Mammary epithelial cell (primary cell): ENCODE measurements at regions of chr15 and their contacts with region 1.

Region 1: DNA sequence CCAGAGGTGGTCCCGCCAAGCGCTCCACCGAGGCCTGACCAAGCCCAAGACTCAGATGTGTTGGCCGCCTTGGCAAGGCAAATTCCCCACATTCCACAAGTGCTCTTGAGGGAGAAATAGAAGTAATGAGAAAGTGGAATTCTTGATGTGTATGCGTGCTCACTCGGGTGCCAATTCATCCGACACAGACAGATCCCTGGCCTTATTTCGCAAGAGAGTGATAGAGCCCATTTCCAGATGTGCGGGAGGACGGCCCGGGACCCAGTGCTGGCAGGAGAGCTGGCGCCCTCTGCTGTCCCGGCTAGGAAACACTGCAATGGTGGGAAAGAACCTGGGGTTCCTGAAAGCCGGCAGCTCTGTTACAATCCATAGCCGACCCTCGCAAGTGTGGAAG is 76.0 kb downstream of the HMG20A start:
- DNase-seq: peak; percentile 69
- H3K4me3 ChIP-seq: peak overlapping the region in 1 of 3 experiments; percentile 24
- H3K27ac ChIP-seq: no peak overlapping the region
- H3K4me1 ChIP-seq: peaks cover 28% of the 10 kb centered on the region
- H3K27me3 ChIP-seq: no peaks in the 10 kb centered on the region
- CTCF ChIP-seq: peak; percentile 92 to 97

Region 2: DNA sequence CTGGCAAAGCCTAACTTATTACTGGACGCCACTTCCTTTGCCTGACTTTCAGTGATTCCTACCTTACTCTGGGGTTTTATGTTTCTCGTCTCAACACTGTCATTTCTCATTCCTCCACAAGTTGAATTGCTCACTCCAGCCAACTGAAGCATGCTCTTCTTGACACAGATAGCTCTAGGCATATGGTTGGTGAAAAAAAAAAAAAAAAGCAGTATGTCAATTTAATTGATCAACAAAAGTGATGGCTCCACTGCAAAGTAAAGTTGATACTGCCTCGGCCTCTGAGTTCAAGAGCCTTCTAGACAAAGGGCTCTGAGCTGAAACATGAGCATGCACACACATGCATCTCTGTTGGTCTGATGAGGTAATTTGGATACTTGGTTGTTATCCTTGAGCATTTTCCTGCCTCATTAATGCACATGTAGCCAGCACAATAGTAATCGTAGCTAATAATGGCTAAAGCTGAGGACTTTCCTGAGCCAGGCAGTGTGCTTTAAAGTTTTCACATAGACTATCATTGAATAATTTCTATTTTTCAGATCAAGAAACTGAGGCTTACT is 1674.8 kb before region 1 on chr15:
- CTCF ChIA-PET with region 1: interaction called, 12 read pairs
- dilution Hi-C with region 1: no loop called
- in situ Hi-C with region 1: no loop called
- intact Hi-C with region 1: no loop called
- DNase-seq: peak; percentile 32
- H3K4me3 ChIP-seq: no peak overlapping the region
- H3K27ac ChIP-seq: no peak overlapping the region
- H3K4me1 ChIP-seq: no peaks in the 10 kb centered on the region
- H3K27me3 ChIP-seq: no peaks in the 10 kb centered on the region
- CTCF ChIP-seq: no peak

Region 3: DNA sequence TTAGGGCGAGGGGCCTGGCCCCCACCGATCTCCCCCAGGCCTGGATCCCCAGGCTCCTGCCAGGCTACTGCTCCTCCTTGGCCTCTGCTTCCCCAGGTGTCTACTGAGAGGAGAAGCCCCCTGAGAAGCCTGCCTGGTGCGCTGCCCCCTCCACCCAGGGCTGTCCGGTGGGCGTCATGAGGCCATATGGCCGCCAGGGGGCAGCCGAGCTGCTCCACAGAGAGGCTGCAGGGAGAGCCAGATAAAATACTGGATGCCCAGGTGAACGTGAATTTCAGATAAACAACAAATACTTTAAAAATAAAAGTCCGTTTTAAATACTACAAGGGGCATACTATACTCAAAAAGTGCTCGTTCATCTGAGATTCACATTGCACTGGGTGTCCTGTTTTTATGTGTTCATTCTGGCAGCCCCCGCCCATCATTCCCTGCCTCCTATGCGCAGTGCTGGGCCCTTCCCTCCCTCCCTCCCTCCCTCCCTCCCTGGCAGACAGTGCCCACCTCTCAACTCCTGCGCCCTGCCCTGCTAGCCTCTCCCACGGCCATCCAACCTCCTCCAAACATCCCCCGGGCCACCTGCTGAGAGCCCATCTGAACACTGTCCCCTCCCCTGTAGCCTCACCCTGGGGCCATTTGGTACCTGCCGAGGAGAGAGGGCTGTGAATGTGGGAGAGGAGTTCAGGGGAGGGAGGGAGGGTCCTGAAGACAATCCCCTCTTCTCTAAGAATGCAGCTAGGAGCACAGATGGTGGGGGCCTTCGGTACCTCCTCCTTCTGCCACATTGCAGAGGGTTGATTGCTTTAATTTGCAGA is 472.2 kb before region 1 on chr15:
- CTCF ChIA-PET with region 1: no interaction called
- dilution Hi-C with region 1: no loop called
- in situ Hi-C with region 1: no loop called
- intact Hi-C with region 1: loop called (anchors 2 kb)
- DNase-seq: peak; percentile 21
- H3K4me3 ChIP-seq: no peak overlapping the region
- H3K27ac ChIP-seq: no peak overlapping the region
- H3K4me1 ChIP-seq: peaks cover 12% of the 10 kb centered on the region
- H3K27me3 ChIP-seq: no peaks in the 10 kb centered on the region
- CTCF ChIP-seq: peak; percentile 75 to 88

Region 4: DNA sequence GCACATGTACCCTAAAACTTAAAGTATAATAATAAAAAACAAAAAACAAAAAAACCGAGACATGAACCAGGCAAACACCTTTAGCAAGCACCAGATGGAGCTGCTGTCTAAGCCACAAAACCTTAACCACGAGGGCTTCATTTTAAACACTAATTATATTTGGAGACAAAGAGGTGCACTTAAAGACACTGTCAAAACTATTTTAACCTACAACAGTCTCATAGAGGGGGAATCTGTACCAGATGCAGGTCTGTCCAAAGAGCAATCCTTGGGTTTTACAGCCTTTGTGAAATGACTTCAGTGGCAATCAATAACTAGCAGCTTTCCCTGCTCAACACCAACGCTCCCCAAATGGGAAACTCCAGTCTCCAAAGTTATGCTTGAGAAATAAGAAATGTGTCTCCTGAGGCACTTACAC is 310.1 kb before region 1 on chr15:
- CTCF ChIA-PET with region 1: interaction called, 5 read pairs
- dilution Hi-C with region 1: no loop called
- in situ Hi-C with region 1: loop called in 1 of 2 experiments (anchors 10 kb)
- intact Hi-C with region 1: loop called (anchors 1 kb)
- DNase-seq: no peak
- H3K4me3 ChIP-seq: no peak overlapping the region
- H3K27ac ChIP-seq: no peak overlapping the region
- H3K4me1 ChIP-seq: peaks cover 8% of the 10 kb centered on the region
- H3K27me3 ChIP-seq: no peaks in the 10 kb centered on the region
- CTCF ChIP-seq: peak; percentile 19 to 53

Region 5: DNA sequence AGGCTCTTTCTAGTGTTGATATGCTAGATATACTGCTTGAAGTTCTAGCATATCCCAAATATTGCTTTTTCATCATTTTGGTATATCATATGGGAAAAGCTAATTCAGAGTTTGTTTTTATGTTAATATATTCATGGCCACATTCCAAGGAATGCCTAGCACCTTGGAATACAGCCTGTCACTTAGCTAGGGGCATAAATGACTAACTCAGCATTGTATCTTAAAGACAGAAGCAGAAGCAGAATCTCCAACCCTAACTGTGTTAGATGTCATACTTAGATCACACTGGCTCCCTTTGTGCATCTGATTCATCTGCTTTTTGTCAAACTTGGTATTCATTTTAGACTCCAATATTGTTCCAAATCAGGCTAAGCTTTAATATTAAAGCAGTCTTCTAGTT is 295.0 kb before region 1 on chr15:
- CTCF ChIA-PET with region 1: no interaction called
- dilution Hi-C with region 1: no loop called
- in situ Hi-C with region 1: no loop called
- intact Hi-C with region 1: no loop called
- DNase-seq: no peak
- H3K4me3 ChIP-seq: no peak overlapping the region
- H3K27ac ChIP-seq: no peak overlapping the region
- H3K4me1 ChIP-seq: no peaks in the 10 kb centered on the region
- H3K27me3 ChIP-seq: no peaks in the 10 kb centered on the region
- CTCF ChIP-seq: no peak

Region 6: DNA sequence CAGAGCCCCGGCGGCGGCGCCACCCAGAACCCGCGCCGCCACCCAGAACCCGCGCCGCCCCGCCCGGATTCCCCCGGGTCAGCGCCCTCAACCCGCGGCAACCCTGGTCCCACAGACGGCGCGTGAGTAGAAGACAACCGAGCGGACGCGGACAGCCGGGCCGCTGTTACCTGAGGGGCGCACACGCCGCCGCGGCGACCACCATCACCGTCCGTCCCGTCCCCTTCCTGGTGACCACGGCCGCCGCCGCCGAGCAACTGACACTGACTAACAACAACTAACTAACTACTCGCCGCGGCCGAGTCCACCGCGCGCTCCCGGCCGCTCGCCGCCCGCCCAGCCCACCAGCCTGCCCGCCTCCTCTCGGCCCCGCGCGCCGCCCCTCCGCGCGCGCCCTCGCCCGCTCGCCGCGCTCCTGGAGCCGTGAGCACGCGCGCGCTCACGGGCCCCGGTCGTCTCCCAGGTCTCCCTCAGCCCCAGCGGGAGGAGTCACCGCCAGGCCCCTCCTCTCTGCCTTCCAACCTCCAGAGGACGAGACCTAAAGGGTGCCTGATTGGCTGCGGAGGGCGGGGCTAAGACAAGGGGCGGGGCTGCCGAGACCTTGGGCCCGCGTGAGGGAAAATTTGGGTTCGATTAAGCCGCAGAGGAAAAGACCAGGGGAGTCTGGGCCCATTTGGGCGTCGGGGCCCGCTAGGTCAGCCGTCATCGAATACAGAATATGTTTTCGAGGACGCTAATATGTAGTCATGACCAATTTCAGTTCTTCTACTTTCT is 76.7 kb before region 1 on chr15 and contains the start of gene PEAK1:
- CTCF ChIA-PET with region 1: no interaction called
- dilution Hi-C with region 1: no loop called
- in situ Hi-C with region 1: no loop called
- intact Hi-C with region 1: loop called (anchors 1 kb)
- DNase-seq: peak; percentile 98
- H3K4me3 ChIP-seq: peak within 1 kb of the TSS; percentile 93 to 99 (median 96)
- H3K27ac ChIP-seq: peak within 1 kb of the TSS; percentile 87
- H3K4me1 ChIP-seq: peaks cover 16% of the 10 kb centered on the region
- H3K27me3 ChIP-seq: no peaks in the 10 kb centered on the region
- CTCF ChIP-seq: no peak
- total RNA-seq, gene PEAK1: 25.5 to 27.6 TPM

Region 7: DNA sequence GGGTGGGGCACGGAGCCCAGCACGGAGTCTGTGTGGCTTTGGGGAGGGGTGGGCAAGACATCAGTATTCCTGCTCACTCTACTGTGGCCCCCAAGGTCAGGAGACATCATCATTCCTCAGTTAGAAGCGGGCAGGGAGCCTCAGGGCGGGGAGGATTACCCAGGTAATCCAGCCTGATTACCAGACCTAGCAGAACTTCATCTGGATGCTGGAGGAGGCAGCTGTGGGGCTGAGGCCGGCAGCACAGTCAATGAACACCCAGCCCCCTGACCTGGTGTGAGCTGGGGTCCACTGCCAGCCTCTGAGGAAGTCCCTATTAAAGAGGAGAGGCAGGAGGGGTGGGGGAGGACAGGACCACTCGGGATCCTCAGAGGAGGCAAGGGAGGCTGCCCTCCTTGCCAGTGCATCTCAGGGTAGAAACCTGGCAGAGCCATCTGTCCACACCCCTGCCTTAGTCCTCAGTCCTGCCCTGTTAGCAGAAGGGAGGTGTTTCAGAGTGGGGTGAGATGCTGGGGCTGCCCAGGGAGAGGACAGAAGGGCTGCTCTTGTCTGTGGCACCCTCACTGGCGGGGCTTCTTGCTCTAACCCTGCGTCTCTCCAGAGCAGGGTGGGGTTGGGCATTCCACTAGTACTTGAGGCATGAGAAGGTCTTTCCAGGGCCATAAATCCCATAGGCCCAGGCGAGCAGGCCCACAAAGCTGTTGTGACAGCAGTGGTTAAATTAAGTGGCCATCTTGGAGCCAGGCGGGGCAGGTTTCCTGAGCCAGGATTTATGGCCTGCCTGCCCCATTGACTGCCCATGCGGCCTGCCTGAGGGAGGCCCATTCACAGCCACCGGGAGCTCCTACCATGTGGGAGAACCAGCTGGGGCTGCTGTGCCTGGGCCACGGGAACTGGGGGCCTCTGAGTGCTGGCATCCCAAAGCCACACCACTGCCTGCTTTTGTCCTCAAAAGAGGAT is 53.9 kb after region 1 on chr15:
- CTCF ChIA-PET with region 1: no interaction called
- dilution Hi-C with region 1: no loop called
- in situ Hi-C with region 1: no loop called
- intact Hi-C with region 1: no loop called
- DNase-seq: no peak
- H3K4me3 ChIP-seq: no peak overlapping the region
- H3K27ac ChIP-seq: no peak overlapping the region
- H3K4me1 ChIP-seq: peaks cover 11% of the 10 kb centered on the region
- H3K27me3 ChIP-seq: peaks cover 2% of the 10 kb centered on the region
- CTCF ChIP-seq: no peak